ENCODE measurements at regions of chr7 and their contacts with region 1.

Region 1: GRCh38 chr7:47669061-47669891 is 87.4 kb upstream of the TNS3 start:
- DNase-seq: peak; percentile 63
- ATAC-seq: peak; percentile 79
- H3K4me3 Mint-ChIP-seq: peak overlapping the region; percentile 67
- H3K27ac Mint-ChIP-seq: peak overlapping the region; percentile 95
- H3K4me1 Mint-ChIP-seq: peaks cover 65% of the 10 kb centered on the region
- H3K27me3 Mint-ChIP-seq: no peaks in the 10 kb centered on the region
- CTCF ChIP-seq: no peak

Region 2: GRCh38 chr7:47482013-47482875 is 187.0 kb before region 1 on chr7:
- CTCF ChIA-PET with region 1: no interaction called
- POLR2A ChIA-PET with region 1: interaction called, 28 read pairs
- intact Hi-C with region 1: loop called (anchors 1 kb)
- DNase-seq: no peak
- ATAC-seq: peak; percentile 74
- H3K4me3 Mint-ChIP-seq: peak overlapping the region; percentile 75
- H3K27ac Mint-ChIP-seq: peak overlapping the region; percentile 91
- H3K4me1 Mint-ChIP-seq: peaks cover 59% of the 10 kb centered on the region
- H3K27me3 Mint-ChIP-seq: no peaks in the 10 kb centered on the region
- CTCF ChIP-seq: no peak

Region 3: DNA sequence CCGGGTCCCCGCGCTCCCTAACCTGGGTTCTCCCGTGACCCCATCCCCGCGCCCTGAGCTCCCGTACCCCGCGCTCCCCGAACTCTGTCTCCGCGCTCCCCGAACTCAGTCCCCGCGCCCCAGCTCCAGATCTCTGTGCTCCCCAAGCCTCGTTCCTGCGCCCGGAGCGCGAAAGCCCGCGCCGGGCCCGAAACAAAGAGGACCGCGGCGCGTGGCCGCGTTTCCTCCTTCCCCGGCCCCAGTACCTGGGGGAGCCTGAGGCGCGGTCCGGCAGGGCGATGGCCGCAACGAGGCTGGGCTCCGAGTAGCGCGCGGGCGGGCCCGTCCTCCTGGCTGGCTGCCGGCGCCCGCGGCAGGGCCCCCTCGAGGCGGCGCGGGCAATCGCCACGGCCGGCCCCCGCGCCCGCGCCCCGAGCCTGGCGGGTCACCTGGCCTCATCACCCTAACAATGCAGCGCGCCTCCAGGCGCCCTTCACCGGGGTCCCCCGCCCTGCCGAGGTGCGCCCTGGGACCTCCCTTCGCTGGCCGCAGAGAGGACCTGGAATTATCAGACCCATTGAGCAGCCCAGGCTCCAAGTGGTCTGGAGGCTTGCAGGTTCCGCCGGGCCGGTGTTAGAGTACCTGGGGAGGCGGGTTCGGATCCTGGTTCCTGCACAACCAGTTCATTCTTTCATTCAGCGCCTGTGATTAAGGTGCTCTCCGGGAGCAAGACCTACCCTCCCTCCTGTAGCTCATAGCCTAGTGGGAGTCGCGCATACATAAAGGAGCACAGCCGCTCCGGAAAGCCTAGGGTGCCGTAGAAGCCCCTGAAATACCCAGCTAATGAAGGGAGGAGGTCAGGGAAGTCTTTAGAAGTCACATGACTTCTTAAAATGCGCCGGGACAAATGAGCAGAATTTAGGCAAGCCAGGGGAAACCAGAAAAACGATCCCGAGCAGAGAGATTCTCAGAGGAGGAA is 87.2 kb before region 1 on chr7 and contains the start of gene TNS3:
- CTCF ChIA-PET with region 1: no interaction called
- POLR2A ChIA-PET with region 1: interaction called, 13 read pairs
- intact Hi-C with region 1: loop called (anchors 1 kb)
- DNase-seq: peak; percentile 64
- ATAC-seq: peak; percentile 80
- H3K4me3 Mint-ChIP-seq: peak within 1 kb of the TSS; percentile 87
- H3K27ac Mint-ChIP-seq: peak within 1 kb of the TSS; percentile 83
- H3K4me1 Mint-ChIP-seq: peaks cover 57% of the 10 kb centered on the region
- H3K27me3 Mint-ChIP-seq: no peaks in the 10 kb centered on the region
- CTCF ChIP-seq: no peak
- total RNA-seq, gene TNS3: 29.4 and 30.3 TPM in 2 replicates

Region 4: GRCh38 chr7:47647181-47647917 is 21.9 kb before region 1 on chr7:
- CTCF ChIA-PET with region 1: interaction called, 3 read pairs
- POLR2A ChIA-PET with region 1: interaction called, 18 read pairs
- intact Hi-C with region 1: loop called (anchors 1 kb)
- DNase-seq: no peak
- ATAC-seq: peak; percentile 91
- H3K4me3 Mint-ChIP-seq: peak overlapping the region; percentile 64
- H3K27ac Mint-ChIP-seq: peak overlapping the region; percentile 72
- H3K4me1 Mint-ChIP-seq: peaks cover 50% of the 10 kb centered on the region
- H3K27me3 Mint-ChIP-seq: no peaks in the 10 kb centered on the region
- CTCF ChIP-seq: no peak

Region 5: GRCh38 chr7:47818796-47819606 is 149.7 kb after region 1 on chr7:
- CTCF ChIA-PET with region 1: interaction called, 4 read pairs
- POLR2A ChIA-PET with region 1: no interaction called
- intact Hi-C with region 1: loop called (anchors 2 kb)
- DNase-seq: no peak
- ATAC-seq: peak; percentile 77
- H3K4me3 Mint-ChIP-seq: no peak overlapping the region
- H3K27ac Mint-ChIP-seq: no peak overlapping the region
- H3K4me1 Mint-ChIP-seq: peaks cover 7% of the 10 kb centered on the region
- H3K27me3 Mint-ChIP-seq: no peaks in the 10 kb centered on the region
- CTCF ChIP-seq: peak; percentile 85

Region 6: DNA sequence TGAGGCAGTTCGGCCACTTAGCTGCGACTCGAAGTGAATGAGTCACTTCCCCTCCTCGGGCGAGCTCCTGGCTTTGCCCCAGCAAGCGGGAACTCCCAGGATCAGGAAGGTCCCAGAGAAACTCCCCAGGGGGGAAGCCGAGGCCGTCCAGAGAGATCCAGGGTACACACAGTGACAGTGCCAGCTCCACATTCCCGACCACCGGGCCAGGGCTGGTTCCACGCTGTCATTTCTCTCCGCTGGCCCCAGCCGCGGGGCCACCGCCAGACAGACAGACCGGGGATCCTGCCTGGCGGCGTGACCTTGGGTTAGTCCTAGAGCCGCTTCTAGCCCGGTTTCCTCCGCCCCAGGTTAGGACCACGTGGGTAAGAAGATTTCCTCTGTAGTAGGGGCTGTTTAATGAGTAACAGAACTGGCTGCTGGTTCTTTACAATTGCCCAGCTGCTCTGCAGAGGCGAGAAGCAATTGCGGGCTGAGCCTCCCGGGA is 419.3 kb after region 1 on chr7:
- CTCF ChIA-PET with region 1: no interaction called
- POLR2A ChIA-PET with region 1: interaction called, 3 read pairs
- intact Hi-C with region 1: loop called (anchors 1 kb)
- DNase-seq: no peak
- ATAC-seq: peak; percentile 73
- H3K4me3 Mint-ChIP-seq: peak overlapping the region; percentile 88
- H3K27ac Mint-ChIP-seq: peak overlapping the region; percentile 82
- H3K4me1 Mint-ChIP-seq: peaks cover 51% of the 10 kb centered on the region
- H3K27me3 Mint-ChIP-seq: no peaks in the 10 kb centered on the region
- CTCF ChIP-seq: no peak